ENCODE measurements at regions of chr20 and their contacts with region 1.

Region 1: DNA sequence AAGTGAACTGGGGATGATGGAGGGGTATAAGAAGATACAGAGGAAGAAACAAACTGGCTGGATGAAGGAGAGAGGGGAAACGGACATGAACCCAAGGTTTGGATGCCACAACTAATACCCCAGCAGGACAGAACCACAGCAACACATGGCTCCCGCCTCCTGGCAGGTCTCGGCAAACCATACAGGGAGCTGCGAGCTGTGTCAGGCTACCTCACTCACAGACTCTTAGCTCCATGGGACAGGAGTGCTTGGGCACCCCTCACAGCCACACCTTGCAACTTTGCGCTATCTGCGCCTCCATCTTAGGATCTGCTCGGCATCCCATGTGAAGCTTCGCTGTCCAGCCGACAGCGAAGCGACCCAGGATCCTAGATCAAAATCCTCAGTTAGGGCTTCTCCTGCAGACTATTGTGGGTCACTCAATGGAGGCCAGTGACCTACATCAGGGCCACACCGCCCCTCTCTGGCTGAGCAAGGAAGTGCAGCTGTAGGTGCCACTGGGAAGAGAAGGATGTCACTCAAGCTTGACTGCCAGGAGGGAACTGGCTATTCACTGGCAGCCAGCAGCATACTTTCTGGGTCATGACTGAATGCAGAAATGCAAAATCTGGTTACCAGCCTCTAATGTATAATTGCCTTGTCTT is 174.4 kb upstream of the RIN2 start:
- DNase-seq: peak; percentile 70 to 81
- H3K4me3 ChIP-seq: no peak overlapping the region
- H3K4me3 Mint-ChIP-seq: no peak overlapping the region
- H3K27ac Mint-ChIP-seq: no peak overlapping the region
- H3K4me1 ChIP-seq: no peaks in the 10 kb centered on the region
- H3K4me1 Mint-ChIP-seq: no peaks in the 10 kb centered on the region
- H3K27me3 ChIP-seq: no peaks in the 10 kb centered on the region
- H3K27me3 Mint-ChIP-seq: peaks cover 26% of the 10 kb centered on the region
- CTCF ChIP-seq: peak; percentile 84 to 87

Region 2: GRCh38 chr20:19205977-19206396 is 377.7 kb before region 1 on chr20:
- CTCF ChIA-PET with region 1: interaction called, 22 read pairs
- POLR2A ChIA-PET with region 1: no interaction called
- intact Hi-C with region 1: loop called (anchors 1 kb)
- DNase-seq: peak; percentile 70 to 86
- H3K4me3 ChIP-seq: no peak overlapping the region
- H3K4me3 Mint-ChIP-seq: no peak overlapping the region
- H3K27ac Mint-ChIP-seq: no peak overlapping the region
- H3K4me1 ChIP-seq: no peaks in the 10 kb centered on the region
- H3K4me1 Mint-ChIP-seq: no peaks in the 10 kb centered on the region
- H3K27me3 ChIP-seq: no peaks in the 10 kb centered on the region
- H3K27me3 Mint-ChIP-seq: peaks cover 29% of the 10 kb centered on the region
- CTCF ChIP-seq: peak; percentile 90 to 95

Region 3: GRCh38 chr20:19212821-19213502 is 370.7 kb before region 1 on chr20:
- CTCF ChIA-PET with region 1: interaction called, 11 read pairs
- POLR2A ChIA-PET with region 1: no interaction called
- intact Hi-C with region 1: no loop called
- DNase-seq: peak; percentile 72 to 81
- H3K4me3 ChIP-seq: peak overlapping the region; percentile 59
- H3K4me3 Mint-ChIP-seq: peak overlapping the region; percentile 67
- H3K27ac Mint-ChIP-seq: no peak overlapping the region
- H3K4me1 ChIP-seq: no peaks in the 10 kb centered on the region; the same call in 1 of the 2 replicates
- H3K4me1 Mint-ChIP-seq: no peaks in the 10 kb centered on the region
- H3K27me3 ChIP-seq: 0 out of 2 replicates have a peak, but pooled peaks cover 1% of the 10 kb centered on the region
- H3K27me3 Mint-ChIP-seq: peaks cover 24% of the 10 kb centered on the region
- CTCF ChIP-seq: peak; percentile 40 to 67

Region 4: DNA sequence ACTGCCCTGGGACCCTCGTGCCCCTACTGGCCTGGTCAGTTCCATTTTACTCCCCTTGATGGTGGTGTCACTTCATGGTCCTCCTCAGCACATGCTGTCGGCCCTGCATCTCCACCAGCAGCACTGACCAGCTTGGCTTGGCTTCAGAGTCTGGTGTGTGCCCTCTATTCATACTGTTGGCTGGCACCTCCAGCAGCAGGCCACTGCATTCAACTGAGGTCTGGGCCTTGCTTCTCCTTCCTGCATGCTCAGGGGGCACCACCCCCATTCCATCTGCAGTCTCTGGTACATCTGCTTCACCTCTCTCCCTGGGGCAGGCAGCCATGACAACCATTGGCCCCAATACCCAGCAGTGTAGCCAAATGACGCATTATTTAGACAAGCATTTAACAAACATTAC is 215.3 kb before region 1 on chr20:
- CTCF ChIA-PET with region 1: no interaction called
- POLR2A ChIA-PET with region 1: no interaction called
- intact Hi-C with region 1: loop called (anchors 10 kb)
- DNase-seq: no peak
- H3K4me3 ChIP-seq: no peak overlapping the region
- H3K4me3 Mint-ChIP-seq: no peak overlapping the region
- H3K27ac Mint-ChIP-seq: no peak overlapping the region
- H3K4me1 ChIP-seq: no peaks in the 10 kb centered on the region
- H3K4me1 Mint-ChIP-seq: no peaks in the 10 kb centered on the region
- H3K27me3 ChIP-seq: no peaks in the 10 kb centered on the region
- H3K27me3 Mint-ChIP-seq: peaks cover 7% of the 10 kb centered on the region
- CTCF ChIP-seq: no peak